Ovary (tissue), 10 donors: ENCODE measurements at regions of chr20 and their contacts with region 1.

Region 1: GRCh38 chr20:63617092-63617865 is 9.6 kb downstream of the GMEB2 start:
- DNase-seq: no peak
- H3K4me3 ChIP-seq: no peak overlapping the region
- H3K27ac ChIP-seq: no peak overlapping the region
- H3K4me1 ChIP-seq: no peaks in the 10 kb centered on the region
- H3K27me3 ChIP-seq: no peaks in the 10 kb centered on the region
- CTCF ChIP-seq: no peak
- EP300 ChIP-seq: no peak
- POLR2A ChIP-seq: no peak

Region 2: DNA sequence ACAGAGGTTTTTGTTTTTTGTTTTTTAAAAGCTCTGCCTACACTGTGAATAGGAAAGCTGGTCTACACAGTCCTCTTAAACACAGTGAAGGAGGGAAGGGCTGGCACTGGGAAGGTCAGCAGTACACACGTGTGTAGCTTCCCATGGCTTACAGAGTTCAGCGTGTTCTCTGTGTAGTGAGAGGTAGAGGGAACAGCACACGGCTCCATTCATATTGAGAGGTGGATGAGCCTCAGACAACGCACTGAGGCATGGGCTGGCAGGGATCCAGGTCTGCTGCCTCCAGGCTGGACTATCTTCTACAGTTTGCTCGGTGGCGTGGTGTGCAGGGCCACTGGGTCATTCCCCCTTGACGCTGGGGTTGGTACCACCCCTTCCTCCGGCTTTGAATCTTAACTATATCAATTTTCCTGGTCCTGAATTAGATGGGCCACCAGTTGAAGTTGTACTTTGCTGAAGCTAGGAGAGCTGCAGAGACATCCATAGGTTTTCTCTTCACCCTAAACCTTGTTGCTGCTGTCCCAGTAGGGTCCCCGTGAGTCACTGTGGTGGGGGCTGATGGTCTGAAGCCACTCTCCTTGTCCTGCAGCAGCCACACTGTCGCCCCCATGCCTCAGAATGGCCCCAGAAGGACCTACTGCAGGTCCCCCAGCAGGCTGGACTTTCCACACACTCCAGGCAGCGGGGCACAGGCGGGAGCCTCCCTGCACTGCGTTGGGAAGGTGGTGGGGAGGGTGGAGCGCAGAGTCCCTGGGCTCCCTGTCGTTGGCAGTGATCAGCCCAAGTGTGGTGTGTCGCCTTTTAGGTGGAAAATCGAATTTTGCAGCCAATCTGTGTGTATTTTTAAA is 342.7 kb before region 1 on chr20:
- intact Hi-C with region 1: loop called in 1 of 4 experiments (anchors 5 kb)
- DNase-seq: no peak
- H3K4me3 ChIP-seq: no peak overlapping the region
- H3K27ac ChIP-seq: no peak overlapping the region
- H3K4me1 ChIP-seq: peaks cover 8% of the 10 kb centered on the region
- H3K27me3 ChIP-seq: no peaks in the 10 kb centered on the region
- CTCF ChIP-seq: no peak
- EP300 ChIP-seq: no peak
- POLR2A ChIP-seq: no peak

Region 3: GRCh38 chr20:63326897-63327745 is 290.2 kb before region 1 on chr20:
- intact Hi-C with region 1: no loop called
- DNase-seq: peak in 2 of 5 donors; percentile 6 to 15
- H3K4me3 ChIP-seq: no peak overlapping the region
- H3K27ac ChIP-seq: no peak overlapping the region
- H3K4me1 ChIP-seq: no peaks in the 10 kb centered on the region
- H3K27me3 ChIP-seq: no peaks in the 10 kb centered on the region
- CTCF ChIP-seq: no peak
- EP300 ChIP-seq: no peak
- POLR2A ChIP-seq: no peak

Region 4: GRCh38 chr20:63657937-63658748 is 40.9 kb after region 1 on chr20 and contains the start of gene RTEL1:
- intact Hi-C with region 1: no loop called
- DNase-seq: peak; percentile 90 to 94 (median 90)
- H3K4me3 ChIP-seq: peak within 1 kb of the TSS; percentile 68
- H3K27ac ChIP-seq: peak within 1 kb of the TSS; percentile 65 to 88
- H3K4me1 ChIP-seq: peaks cover 12% of the 10 kb centered on the region
- H3K27me3 ChIP-seq: no peaks in the 10 kb centered on the region
- CTCF ChIP-seq: peak in 2 of 3 donors; percentile 34 to 53
- EP300 ChIP-seq: peak; percentile 31
- POLR2A ChIP-seq: peak; percentile 60
- total RNA-seq, gene RTEL1: 17.0 to 44.2 (median 24.1) TPM

Region 5: GRCh38 chr20:63942250-63942959 is 325.1 kb after region 1 on chr20:
- intact Hi-C with region 1: no loop called
- DNase-seq: peak in 4 of 5 donors; percentile 17 to 55 (median 44)
- H3K4me3 ChIP-seq: no peak overlapping the region
- H3K27ac ChIP-seq: no peak overlapping the region
- H3K4me1 ChIP-seq: no peaks in the 10 kb centered on the region
- H3K27me3 ChIP-seq: no peaks in the 10 kb centered on the region
- CTCF ChIP-seq: no peak
- EP300 ChIP-seq: no peak
- POLR2A ChIP-seq: no peak